ENCODE measurements at regions of chr19 and their contacts with region 1.

Region 1: GRCh38 chr19:12847159-12848139 is 9.1 kb downstream of the MAST1 start:
- DNase-seq: peak; percentile 93
- CTCF ChIP-seq: peak; percentile 99

Region 2: DNA sequence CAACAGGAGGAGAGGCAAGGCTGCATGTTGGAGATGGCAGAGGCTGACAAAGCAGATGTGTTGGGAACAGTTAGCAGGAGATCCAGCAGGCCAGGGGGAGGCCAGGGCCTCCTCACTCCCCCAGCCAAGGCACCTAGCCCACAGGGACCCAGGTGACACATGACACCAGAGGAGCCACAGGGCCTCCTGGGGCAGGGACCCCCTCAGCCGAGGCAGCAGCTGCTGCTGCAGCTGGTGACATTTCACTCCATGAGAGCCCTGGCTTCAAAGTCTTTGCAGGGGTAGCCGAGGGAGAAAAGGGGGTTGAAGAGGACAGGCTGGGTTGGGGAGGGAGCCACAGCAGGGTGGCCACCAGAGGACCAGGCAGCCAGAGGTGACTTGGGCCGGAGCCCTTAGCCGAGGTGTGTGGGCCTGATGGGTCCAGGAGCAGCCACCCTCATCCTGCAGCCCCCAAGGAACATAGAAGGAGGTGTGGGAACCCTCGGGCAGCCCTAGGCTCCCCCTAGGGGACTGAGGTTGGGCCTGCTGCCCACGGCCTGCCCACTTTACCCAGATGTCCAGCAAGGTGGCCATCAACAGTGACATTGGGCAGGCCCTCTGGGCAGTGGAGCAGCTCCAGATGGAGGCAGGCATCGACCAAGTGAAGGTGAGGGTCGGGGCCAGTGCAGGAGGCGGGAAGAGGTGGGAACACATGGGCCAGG is 159.8 kb before region 1 on chr19 and contains the start of gene GNG14:
- CTCF ChIA-PET with region 1: no interaction called
- POLR2A ChIA-PET with region 1: no interaction called
- DNase-seq: no peak
- CTCF ChIP-seq: no peak

Region 3: GRCh38 chr19:12716861-12717260 is 130.6 kb before region 1 on chr19:
- CTCF ChIA-PET with region 1: interaction called, 15 read pairs
- POLR2A ChIA-PET with region 1: no interaction called
- DNase-seq: no peak
- CTCF ChIP-seq: peak; percentile 38

Region 4: DNA sequence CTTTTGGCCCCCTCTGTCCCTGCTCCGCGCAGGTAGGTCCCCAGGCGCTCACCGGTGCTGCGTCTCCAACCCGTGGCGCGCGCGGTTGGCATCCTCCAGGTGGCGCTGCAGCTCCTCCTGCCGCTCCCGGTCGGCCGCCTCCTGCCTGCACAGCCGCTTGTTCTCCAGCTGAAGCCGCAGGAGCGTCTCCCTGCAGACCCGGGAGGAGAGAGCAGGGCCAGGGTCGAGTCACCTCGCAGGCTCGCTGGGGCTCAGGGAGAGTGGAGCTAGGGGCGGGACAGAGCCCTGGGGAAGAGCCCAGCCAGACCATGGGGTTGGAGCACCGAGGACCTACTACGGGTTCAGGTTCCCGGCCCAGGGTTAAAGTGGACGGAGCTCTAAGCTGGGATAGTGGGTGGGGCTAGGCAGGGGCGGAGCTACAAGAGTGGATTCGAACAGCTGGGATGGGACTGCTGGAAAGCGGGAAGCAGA is 81.4 kb before region 1 on chr19:
- CTCF ChIA-PET with region 1: interaction called, 369 read pairs
- POLR2A ChIA-PET with region 1: no interaction called
- DNase-seq: peak; percentile 83
- CTCF ChIP-seq: peak; percentile 97

Region 5: DNA sequence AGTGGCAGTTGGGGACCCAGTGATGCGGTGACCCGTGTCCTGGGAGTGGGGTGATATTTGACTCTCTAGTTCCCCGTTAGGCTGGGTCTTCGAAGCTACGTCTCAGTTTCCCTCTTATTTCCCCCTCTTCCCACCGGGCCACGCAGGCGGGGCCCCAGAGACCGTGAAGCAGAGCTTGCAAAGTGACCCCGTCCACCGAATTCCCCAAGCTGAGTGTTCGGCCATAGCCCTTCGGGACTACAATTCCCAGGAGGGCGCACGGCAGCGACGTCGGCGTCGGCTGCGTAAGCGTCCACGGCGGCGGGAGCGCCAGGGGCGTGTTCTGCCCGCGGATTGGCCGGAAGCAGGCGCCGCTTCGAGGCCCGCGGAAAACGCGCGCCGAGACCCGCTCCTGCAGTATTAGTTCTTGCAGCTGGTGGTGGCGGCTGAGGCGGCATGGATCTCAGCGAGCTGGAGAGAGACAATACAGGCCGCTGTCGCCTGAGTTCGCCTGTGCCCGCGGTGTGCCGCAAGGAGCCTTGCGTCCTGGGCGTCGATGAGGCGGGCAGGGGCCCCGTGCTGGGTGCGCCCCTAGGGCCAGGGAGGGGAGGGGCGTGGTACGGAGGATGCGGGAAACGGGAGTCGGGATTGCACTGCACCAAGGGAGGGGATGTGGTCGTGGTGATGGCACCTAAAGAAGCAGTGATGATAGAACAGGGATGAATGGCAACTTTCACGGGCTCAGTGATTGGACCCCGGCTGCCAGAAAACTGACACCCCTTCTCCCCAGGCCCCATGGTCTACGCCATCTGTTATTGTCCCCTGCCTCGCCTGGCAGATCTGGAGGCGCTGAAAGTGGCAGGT is 41.0 kb before region 1 on chr19 and contains the start of gene RNASEH2A:
- CTCF ChIA-PET with region 1: interaction called, 50 read pairs
- POLR2A ChIA-PET with region 1: no interaction called
- DNase-seq: peak; percentile 98
- CTCF ChIP-seq: no peak

Region 6: DNA sequence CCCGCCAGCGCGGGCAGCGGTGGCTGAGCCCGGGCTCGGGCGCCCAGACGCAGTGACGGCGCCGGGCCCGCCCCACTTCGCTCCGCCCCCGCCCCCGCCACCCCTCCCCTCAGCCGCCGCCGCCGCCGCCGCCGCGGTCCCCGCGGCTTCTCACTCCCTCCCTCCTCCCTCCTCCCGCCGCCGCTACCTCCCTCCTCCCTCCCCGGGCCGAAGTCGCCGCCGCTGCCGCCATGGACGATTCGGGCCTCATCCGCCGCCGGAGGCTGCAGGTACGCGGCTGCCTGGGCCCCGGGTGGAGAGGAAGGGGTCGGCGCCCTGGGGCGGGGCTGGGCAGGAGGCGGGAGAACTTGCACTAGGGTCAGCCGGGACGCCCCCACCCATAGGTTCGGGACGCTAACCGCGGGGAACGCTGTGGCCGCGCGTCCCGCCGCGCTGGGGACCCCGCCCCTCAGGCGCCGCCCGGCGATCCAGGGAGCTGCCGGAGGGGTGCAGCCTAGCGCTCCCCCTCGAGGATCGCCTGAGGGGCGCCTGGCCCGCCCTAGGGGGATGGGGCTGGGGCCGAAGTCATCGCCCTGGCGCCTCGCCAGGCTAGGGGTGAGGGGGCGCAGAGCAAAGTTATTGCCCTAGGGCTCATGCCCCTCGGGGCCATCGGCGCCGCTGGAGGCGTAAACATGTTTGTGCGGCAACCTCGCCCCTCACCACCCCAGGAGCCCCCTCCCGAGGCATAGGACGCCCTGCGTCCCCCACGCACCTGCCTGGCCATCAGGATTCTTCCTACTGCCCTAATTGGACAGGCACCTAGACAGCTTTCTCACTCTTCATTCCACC is 13.5 kb before region 1 on chr19:
- CTCF ChIA-PET with region 1: interaction called, 20 read pairs
- POLR2A ChIA-PET with region 1: no interaction called
- DNase-seq: peak; percentile 69
- CTCF ChIP-seq: no peak

Region 7: GRCh38 chr19:12872941-12873890 is 25.8 kb after region 1 on chr19:
- CTCF ChIA-PET with region 1: interaction called, 36 read pairs
- POLR2A ChIA-PET with region 1: interaction called, 3 read pairs
- DNase-seq: peak; percentile 68
- CTCF ChIP-seq: no peak

Region 8: GRCh38 chr19:12899891-12900518 is 52.6 kb after region 1 on chr19:
- CTCF ChIA-PET with region 1: interaction called, 18 read pairs
- POLR2A ChIA-PET with region 1: no interaction called
- DNase-seq: peak; percentile 82
- CTCF ChIP-seq: no peak

Region 9: GRCh38 chr19:12983542-12984142 is 136.2 kb after region 1 on chr19:
- CTCF ChIA-PET with region 1: no interaction called
- POLR2A ChIA-PET with region 1: no interaction called
- DNase-seq: peak; percentile 88
- CTCF ChIP-seq: peak; percentile 95

Measured in GM10248 (cell line).